CD4-positive, alpha-beta T cell (primary cell): ENCODE measurements at regions of chr20 and their contacts with region 1.

Region 1: DNA sequence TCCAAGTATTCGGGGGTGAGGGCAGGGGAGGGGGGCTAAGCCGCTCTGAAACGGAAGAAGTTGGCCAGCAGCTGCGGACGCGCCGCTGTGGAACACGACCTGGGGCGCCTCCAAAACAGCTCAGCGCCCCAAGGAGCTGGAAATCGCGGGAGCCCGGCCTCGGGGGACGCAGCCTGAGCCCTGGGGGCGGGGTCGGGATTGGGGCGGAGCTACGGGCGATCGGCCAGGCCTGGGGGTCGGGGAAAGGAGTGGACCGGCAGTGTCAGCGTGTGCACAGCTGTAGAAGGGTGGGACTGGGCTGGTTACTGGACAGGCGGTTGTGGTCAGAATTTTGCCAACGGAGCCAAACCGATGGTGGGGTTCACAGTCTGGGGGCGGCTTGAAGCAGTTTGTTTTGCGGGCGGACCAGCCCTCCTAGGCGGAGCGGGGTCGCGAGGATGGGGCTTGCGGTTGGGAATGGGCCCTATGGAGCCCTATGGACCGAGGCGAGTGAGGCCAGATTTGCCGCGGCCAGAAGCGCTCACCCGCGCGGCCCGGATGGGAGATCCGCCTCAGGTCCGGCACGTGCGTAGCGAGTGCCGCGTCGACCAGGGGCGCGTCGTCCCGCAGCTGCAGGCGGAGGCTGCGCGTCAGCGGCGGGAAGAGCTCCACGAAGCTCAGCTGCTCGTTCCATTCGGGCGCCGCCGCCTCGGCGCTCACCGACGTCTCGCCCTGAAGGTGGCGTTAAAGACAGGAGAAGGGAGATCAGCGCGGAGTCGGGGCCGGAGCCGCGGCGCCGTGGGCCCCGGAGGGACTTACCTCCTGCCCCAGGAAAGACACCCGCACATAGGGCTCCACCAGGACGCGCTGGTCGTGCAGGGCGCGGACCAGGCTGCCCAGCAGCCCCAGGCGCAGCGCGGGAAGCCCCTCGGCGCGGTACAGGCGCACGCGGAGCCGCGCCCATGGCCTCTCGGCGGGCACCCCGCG is 14.3 kb upstream of the SPAG4 start:
- DNase-seq: peak; percentile 65 to 92 (median 76)
- ATAC-seq: peak; percentile 95
- H3K4me3 ChIP-seq: peak overlapping the region; percentile 58
- H3K4me3 Mint-ChIP-seq: peak overlapping the region; percentile 77
- H3K27ac ChIP-seq: no peak overlapping the region
- H3K27ac Mint-ChIP-seq: no peak overlapping the region
- H3K4me1 ChIP-seq: peaks cover 19% of the 10 kb centered on the region
- H3K4me1 Mint-ChIP-seq: peaks cover 14% of the 10 kb centered on the region
- H3K27me3 ChIP-seq: peaks cover 9 to 15% of the 10 kb centered on the region in 2 experiments
- H3K27me3 Mint-ChIP-seq: peaks cover 22% of the 10 kb centered on the region
- CTCF ChIP-seq: peak; percentile 64

Region 2: DNA sequence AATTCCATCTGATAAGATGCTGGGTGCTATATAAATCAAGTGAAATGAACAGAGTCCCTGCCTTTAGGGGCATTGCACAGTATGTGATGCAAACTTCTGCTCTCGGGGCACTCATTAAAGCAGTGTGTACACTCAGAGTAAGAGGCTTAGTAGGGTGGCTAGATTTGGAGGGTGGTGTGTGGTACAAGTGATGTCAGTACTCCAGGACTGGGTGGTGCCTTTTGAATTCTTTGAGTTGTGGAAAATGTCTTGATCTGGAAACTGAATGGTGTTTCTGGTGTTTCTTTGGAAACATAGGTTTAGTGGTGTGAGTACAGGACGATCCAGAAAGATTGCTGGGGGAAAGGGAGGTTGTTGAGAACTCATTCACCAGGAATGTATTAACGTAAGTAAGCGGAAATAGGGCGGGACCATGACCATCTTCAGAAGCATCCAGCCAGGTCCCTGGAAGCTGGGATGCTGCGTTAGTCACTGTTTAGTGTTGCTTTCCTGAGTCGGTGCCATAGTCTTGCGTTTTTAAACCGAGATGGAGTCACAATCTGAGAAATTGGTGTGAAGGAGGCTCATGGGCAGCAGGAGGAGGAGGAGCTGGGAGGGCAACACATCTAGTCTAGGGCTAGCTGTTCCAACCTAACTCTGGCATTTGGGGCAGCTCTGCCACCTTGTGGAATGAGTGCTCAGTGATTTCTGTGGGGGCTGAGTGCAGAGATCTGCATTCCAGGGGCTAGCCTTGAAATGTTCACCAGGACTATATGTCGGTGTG is 282.7 kb after region 1 on chr20:
- CTCF ChIA-PET with region 1: no interaction called
- POLR2A ChIA-PET with region 1: no interaction called
- intact Hi-C with region 1: loop called (anchors 5 to 10 kb)
- DNase-seq: peak; percentile 35 to 75 (median 52)
- ATAC-seq: peak; percentile 91
- H3K4me3 ChIP-seq: no peak overlapping the region
- H3K4me3 Mint-ChIP-seq: no peak overlapping the region
- H3K27ac ChIP-seq: no peak overlapping the region
- H3K27ac Mint-ChIP-seq: peak overlapping the region; percentile 43
- H3K4me1 ChIP-seq: peaks cover 5% of the 10 kb centered on the region
- H3K4me1 Mint-ChIP-seq: peaks cover 16% of the 10 kb centered on the region
- H3K27me3 ChIP-seq: no peaks in the 10 kb centered on the region
- H3K27me3 Mint-ChIP-seq: no peaks in the 10 kb centered on the region
- CTCF ChIP-seq: peak; percentile 77